ENCODE measurements at regions of chr20 and their contacts with region 1.

Region 1: DNA sequence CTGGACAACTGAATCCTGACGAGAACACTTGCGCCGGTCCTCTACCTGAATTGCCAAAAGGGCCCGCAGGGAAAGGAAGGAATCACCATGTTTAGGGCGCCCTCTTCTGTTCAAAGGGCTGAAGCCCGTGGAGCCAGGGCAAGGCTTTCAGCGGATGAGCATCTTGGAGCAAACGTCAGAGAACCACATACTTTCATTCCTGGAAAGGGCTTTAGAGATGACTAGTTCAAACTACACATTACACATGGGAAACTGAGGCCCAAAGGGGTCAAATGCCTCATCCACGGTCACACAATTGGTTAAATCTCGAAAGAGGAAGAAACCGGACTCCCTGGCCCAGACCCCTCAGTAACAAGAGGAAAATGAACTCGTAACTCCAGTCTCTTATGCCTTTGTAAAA is 11.5 kb upstream of the ZNF133 start:
- DNase-seq: peak; percentile 85
- H3K4me3 Mint-ChIP-seq: no peak overlapping the region
- H3K27ac Mint-ChIP-seq: no peak overlapping the region
- H3K4me1 Mint-ChIP-seq: peaks cover 19% of the 10 kb centered on the region
- H3K27me3 Mint-ChIP-seq: peaks cover 12% of the 10 kb centered on the region
- CTCF ChIP-seq: peak; percentile 77

Region 2: DNA sequence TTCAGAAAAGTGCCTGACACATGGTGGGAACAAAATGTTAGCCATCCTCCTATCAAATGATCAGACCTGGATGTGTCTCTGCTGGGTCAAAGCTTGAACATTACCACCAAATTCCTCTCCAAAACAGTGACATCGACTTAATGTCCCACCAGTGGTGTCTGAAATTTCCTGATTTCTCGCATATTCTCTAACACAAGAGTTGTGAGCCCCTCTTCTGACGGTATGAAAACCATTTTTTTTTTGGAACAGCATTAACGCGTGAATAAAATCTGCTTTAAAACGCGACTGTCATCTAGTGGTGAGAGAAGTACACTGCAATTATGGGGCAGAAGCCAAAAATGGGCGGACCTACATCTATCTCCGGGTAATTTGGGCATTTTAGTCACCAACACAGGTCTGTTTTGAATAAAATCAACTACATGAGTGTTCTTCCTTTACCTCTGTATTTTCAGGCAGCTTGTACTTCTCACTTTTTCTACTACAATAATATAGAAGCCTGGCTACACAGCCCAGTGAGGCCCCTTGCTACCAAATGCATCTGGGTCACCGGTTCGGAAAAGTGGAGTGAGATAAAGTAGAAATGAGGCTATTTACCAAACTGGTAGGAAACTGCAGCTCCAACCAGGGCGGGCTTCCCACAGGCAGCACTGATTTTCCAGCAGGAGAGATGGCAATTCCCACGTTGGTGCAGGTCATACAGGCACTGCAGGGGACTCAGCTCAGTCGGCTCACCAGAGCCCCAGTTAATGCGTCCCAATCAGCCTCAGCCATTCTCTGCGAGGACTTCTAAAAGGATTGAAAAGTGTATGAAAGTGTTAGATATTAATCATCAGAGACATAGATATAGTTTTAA is 280.6 kb before region 1 on chr20:
- CTCF ChIA-PET with region 1: interaction called, 13 read pairs
- POLR2A ChIA-PET with region 1: interaction called, 7 read pairs
- intact Hi-C with region 1: loop called (anchors 1 kb)
- DNase-seq: peak; percentile 75
- H3K4me3 Mint-ChIP-seq: no peak overlapping the region
- H3K27ac Mint-ChIP-seq: no peak overlapping the region
- H3K4me1 Mint-ChIP-seq: peaks cover 14% of the 10 kb centered on the region
- H3K27me3 Mint-ChIP-seq: no peaks in the 10 kb centered on the region
- CTCF ChIP-seq: peak; percentile 89

Region 3: GRCh38 chr20:18056174-18057100 is 220.4 kb before region 1 on chr20:
- CTCF ChIA-PET with region 1: interaction called, 4 read pairs
- POLR2A ChIA-PET with region 1: interaction called, 4 read pairs
- intact Hi-C with region 1: loop called (anchors 2 kb)
- DNase-seq: peak; percentile 21
- H3K4me3 Mint-ChIP-seq: peak overlapping the region; percentile 71
- H3K27ac Mint-ChIP-seq: no peak overlapping the region
- H3K4me1 Mint-ChIP-seq: peaks cover 20% of the 10 kb centered on the region
- H3K27me3 Mint-ChIP-seq: peaks cover 29% of the 10 kb centered on the region
- CTCF ChIP-seq: no peak

Region 4: DNA sequence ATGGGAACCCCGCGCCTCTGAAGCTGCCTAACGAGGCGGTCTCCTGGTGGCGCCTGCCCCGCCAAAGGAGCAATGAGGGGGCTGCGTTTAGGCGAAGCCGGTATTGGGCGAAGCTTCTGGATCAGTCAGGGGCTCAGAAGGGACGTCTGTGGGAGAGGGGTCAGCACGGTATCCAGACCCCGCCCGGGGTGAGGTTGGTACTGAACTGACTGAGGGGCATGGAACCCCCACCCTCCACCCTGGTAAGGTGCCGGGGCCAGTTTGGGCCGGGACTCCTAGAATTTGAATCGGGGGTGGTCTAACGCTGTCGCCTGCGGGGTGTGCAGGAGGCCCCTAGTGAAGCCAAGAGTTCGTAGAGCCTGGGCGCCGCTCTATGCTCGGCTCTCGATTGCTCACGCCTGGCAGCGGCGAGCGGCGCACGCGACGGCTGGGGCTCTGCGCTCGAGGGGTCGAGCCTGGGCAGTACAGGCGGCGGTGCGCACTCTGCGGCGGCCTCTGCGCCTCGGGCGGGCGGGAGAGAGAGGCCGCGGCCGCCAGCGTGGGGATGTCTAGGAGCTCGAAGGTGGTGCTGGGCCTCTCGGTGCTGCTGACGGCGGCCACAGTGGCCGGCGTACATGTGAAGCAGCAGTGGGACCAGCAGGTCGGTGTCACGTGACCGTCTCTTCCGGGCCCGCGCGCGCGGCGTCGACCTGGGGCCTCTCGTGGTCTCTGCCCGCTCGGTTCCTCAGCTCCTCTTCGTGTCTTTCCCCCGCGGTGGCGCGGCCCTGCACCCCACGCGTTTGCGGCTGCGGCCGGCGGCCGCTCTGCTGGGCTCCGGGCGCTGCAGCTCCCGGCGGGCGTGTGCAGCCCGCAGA is 139.2 kb before region 1 on chr20 and contains the starts of genes KAT14 and PET117:
- CTCF ChIA-PET with region 1: interaction called, 8 read pairs
- POLR2A ChIA-PET with region 1: interaction called, 4 read pairs
- intact Hi-C with region 1: loop called (anchors 2 kb)
- DNase-seq: peak; percentile 87
- H3K4me3 Mint-ChIP-seq: peak within 1 kb of the TSS; percentile 81
- H3K27ac Mint-ChIP-seq: peak within 1 kb of the TSS; percentile 21
- H3K4me1 Mint-ChIP-seq: peaks cover 24% of the 10 kb centered on the region
- H3K27me3 Mint-ChIP-seq: no peaks in the 10 kb centered on the region
- CTCF ChIP-seq: no peak
- total RNA-seq, gene KAT14: 15.5 and 16.4 TPM in 2 replicates
- total RNA-seq, gene PET117: 11.9 and 14.8 TPM in 2 replicates

Region 5: GRCh38 chr20:18197382-18198131 is 79.3 kb before region 1 on chr20:
- CTCF ChIA-PET with region 1: interaction called, 39 read pairs
- POLR2A ChIA-PET with region 1: interaction called, 10 read pairs
- intact Hi-C with region 1: loop called (anchors 1 kb)
- DNase-seq: peak; percentile 87
- H3K4me3 Mint-ChIP-seq: no peak overlapping the region
- H3K27ac Mint-ChIP-seq: peak overlapping the region; percentile 89
- H3K4me1 Mint-ChIP-seq: no peaks in the 10 kb centered on the region
- H3K27me3 Mint-ChIP-seq: no peaks in the 10 kb centered on the region
- CTCF ChIP-seq: peak; percentile 18

Region 6: GRCh38 chr20:18263723-18264122 is 13.1 kb before region 1 on chr20:
- CTCF ChIA-PET with region 1: interaction called, 10 read pairs
- POLR2A ChIA-PET with region 1: interaction called, 8 read pairs
- intact Hi-C with region 1: no loop called
- DNase-seq: peak; percentile 23
- H3K4me3 Mint-ChIP-seq: no peak overlapping the region
- H3K27ac Mint-ChIP-seq: no peak overlapping the region
- H3K4me1 Mint-ChIP-seq: peaks cover 7% of the 10 kb centered on the region
- H3K27me3 Mint-ChIP-seq: no peaks in the 10 kb centered on the region
- CTCF ChIP-seq: no peak

Region 7: DNA sequence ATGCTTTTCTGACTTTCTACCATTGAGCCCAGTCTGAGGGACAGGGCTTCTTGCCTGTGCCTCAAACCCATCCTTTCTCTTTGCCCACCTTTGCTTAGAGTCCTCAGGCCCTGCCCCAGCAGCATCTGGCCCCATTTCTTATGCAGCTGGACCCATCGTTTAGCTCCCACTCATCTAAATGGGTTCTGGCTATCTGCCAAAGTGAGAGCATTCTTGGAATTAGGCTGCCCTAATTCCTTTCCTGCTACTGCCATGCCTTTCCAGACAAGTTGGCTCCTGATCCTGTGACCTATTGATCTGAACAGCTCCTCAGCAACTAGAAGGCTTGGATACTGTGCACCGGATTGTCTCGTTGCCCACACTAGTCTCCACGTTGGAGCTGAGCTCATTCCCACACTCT is 167.0 kb after region 1 on chr20:
- CTCF ChIA-PET with region 1: no interaction called
- POLR2A ChIA-PET with region 1: no interaction called
- intact Hi-C with region 1: no loop called
- DNase-seq: peak; percentile 8
- H3K4me3 Mint-ChIP-seq: no peak overlapping the region
- H3K27ac Mint-ChIP-seq: no peak overlapping the region
- H3K4me1 Mint-ChIP-seq: no peaks in the 10 kb centered on the region
- H3K27me3 Mint-ChIP-seq: no peaks in the 10 kb centered on the region
- CTCF ChIP-seq: no peak

Region 8: GRCh38 chr20:18537651-18538050 is 260.8 kb after region 1 on chr20:
- CTCF ChIA-PET with region 1: no interaction called
- POLR2A ChIA-PET with region 1: no interaction called
- intact Hi-C with region 1: no loop called
- DNase-seq: peak; percentile 27
- H3K4me3 Mint-ChIP-seq: no peak overlapping the region
- H3K27ac Mint-ChIP-seq: no peak overlapping the region
- H3K4me1 Mint-ChIP-seq: peaks cover 7% of the 10 kb centered on the region
- H3K27me3 Mint-ChIP-seq: no peaks in the 10 kb centered on the region
- CTCF ChIP-seq: no peak